ENCODE measurements at regions of chr12 and their contacts with region 1.

Region 1: DNA sequence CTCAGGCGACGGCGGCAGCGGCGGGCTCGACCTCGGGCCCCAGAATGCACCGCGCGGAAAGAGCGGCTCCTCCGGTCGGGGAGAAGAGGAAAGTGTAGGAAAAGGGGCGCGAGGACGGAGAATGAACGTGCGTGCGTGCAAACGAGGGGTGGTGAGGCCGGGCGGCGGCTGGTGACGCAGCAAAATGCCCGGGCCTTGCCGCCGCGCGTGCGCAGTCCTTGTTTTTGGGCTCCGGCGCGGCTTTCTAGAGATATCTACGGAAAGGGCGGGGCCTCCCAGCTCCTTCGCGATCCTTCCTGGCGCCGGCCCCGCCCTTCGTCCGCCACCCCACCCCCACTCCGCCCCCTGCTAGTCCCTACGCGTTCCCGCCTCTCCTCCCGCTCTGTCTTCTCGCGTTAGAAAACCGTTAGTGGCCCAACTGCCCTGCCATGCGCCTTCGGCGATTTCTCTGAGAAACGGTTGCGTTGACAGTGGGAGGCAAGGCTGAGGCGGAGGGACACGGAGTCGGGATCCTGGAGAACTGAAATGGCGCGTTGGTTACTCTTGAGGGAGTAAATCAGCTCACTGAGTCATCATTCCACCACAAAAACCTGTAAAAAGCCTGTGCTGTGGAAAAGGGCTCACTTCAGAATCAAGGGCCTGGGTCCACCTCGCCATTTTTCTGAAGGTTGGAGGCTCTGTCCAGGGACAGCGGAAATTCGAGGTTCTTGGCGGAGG is at the start of gene PTGES3:
- DNase-seq: peak; percentile 97 to 99 (median 98)
- H3K4me3 ChIP-seq: peak within 1 kb of the TSS; percentile 93
- H3K27ac ChIP-seq: peak within 1 kb of the TSS; percentile 99 to 100
- H3K4me1 ChIP-seq: peaks cover 5% of the 10 kb centered on the region
- H3K27me3 ChIP-seq: no peaks in the 10 kb centered on the region
- CTCF ChIP-seq: peak in 1 of 3 donors; percentile 11
- EP300 ChIP-seq: peak; percentile 49
- POLR2A ChIP-seq: peak; percentile 94
- total RNA-seq, gene PTGES3: 109 to 328 (median 212) TPM

Region 2: DNA sequence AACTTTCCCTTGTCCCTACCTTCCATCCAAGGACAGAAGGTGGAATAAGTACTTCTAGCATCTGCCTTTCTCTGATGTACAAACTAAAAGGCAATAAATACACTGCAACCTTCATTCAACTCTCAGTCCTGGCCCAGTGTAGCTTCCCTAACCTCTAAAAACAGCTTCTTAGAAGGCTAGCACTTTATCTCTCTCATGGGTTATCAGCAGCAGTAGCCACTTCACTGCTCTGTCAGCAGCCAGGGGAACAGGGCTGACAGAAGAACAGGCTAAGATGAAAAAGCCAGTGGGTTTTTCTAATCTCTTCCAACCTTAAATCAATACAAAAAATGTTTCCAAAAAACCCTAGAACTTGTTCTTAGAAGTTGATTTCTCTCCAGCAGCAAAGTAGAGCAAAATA is 71.4 kb before region 1 on chr12:
- intact Hi-C with region 1: no loop called
- DNase-seq: no peak
- H3K4me3 ChIP-seq: no peak overlapping the region
- H3K27ac ChIP-seq: no peak overlapping the region
- H3K4me1 ChIP-seq: peaks cover 1% of the 10 kb centered on the region
- H3K27me3 ChIP-seq: no peaks in the 10 kb centered on the region
- CTCF ChIP-seq: no peak
- EP300 ChIP-seq: no peak
- POLR2A ChIP-seq: no peak

Region 3: GRCh38 chr12:56636675-56637540 is 51.4 kb before region 1 on chr12:
- intact Hi-C with region 1: loop called in 2 of 4 experiments (anchors 5 kb)
- DNase-seq: peak; percentile 100
- H3K4me3 ChIP-seq: peak overlapping the region; percentile 64
- H3K27ac ChIP-seq: peak overlapping the region; percentile 90
- H3K4me1 ChIP-seq: peaks cover 14% of the 10 kb centered on the region
- H3K27me3 ChIP-seq: no peaks in the 10 kb centered on the region
- CTCF ChIP-seq: peak; percentile 59 to 68 (median 61)
- EP300 ChIP-seq: peak; percentile 10
- POLR2A ChIP-seq: no peak

Region 4: DNA sequence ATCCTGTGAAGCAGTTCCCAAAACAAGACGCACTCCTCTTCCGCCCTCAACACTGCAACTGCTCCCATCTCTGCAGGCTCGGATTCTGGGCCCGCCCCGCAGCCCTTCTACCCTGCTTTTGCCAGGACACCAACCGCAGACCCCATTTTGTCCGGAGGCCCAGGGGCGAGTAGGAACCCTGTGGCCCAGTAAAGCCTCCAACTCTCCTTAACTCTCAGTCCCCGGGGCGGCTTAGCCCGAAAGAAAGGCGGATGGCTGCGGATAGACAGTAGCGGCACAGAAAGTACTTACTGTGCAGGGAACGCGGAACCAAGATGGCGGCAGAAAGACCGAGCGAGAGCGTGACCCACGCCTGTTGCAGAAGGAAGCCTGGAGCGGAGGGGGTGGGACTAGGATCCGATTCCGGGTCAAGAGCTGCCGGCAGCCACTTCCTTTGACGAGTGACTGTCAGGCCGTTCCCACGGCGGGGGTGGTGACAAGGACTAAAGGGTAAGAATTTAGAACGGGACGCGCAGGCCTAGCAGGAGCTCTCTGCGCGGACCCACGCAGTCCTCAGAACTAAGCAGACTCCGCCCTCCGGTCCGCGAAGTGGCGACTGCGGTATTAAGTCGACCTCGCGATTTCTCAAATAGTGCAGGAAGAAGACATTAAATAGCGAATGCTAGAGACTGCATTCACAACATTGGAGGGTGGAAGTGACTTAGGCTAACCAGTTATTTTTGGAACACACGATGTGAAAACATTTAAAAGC is 36.9 kb after region 1 on chr12 and contains the start of gene NACA:
- intact Hi-C with region 1: loop called in 3 of 4 experiments (anchors 2 to 5 kb)
- DNase-seq: peak; percentile 96
- H3K4me3 ChIP-seq: peak within 1 kb of the TSS; percentile 92
- H3K27ac ChIP-seq: peak within 1 kb of the TSS; percentile 75 to 84
- H3K4me1 ChIP-seq: peaks cover 17% of the 10 kb centered on the region
- H3K27me3 ChIP-seq: no peaks in the 10 kb centered on the region
- CTCF ChIP-seq: peak in 1 of 3 donors; percentile 19
- EP300 ChIP-seq: peak; percentile 42
- POLR2A ChIP-seq: peak; percentile 98
- total RNA-seq, gene NACA: 1,240 to 2,316 (median 1,807) TPM

Measured in ovary (tissue), 10 donors.